T-cell (primary cell): ENCODE measurements at regions of chr11 and their contacts with region 1.

Region 1: DNA sequence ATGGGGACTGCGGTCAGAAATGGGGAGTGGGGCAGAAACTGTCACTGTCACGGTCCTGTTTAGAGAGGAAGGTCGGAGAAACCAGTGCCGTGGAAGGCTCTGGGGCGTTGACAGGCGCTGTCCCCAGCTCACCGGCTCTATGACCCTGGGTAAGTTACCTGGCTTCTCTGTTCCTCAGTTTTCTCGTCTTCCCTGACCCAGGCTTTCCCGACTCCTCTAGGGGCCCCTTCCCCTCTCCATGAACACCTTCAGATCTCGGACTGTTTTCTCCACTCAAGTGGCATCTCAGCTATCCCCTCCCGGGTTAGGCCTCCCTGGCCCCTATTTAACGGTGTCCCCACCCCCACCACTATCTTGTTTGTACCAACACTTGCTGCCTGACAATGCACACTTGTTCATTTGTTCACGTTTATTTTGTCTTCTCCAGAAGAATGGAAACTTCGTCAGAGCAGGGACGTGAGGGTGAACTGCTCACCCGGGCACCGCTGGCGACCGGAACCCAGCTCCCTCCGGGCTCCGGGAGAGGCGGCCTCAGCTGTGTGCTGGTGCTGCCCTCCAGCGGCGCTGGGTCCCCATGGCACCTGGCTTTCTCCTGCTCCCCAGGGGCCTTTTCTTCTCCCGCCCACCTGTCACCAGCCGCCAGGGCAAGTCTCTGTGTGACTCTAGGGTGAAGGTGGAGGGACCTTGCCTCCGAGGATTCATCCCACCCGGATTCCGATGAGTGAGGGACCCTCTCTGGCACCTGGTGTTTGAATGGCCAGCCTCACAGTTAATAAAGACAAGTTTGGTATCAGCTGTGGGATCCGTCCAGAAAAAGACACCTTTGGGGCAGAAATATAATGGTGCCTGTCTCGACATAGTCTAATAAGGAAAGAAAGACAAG is 33.1 kb upstream of the SLC35C1 start:
- DNase-seq: peak; percentile 41 to 86 (median 69)
- ATAC-seq: peak; percentile 87 to 89 (median 87)
- H3K4me3 ChIP-seq: peak overlapping the region; percentile 52 to 94
- H3K4me3 Mint-ChIP-seq: peak overlapping the region; percentile 88 to 96 (median 92)
- H3K27ac ChIP-seq: peak overlapping the region; percentile 48
- H3K27ac Mint-ChIP-seq: peak overlapping the region; percentile 72 to 85
- H3K4me1 ChIP-seq: peaks cover 6 to 19% of the 10 kb centered on the region in 2 experiments
- H3K4me1 Mint-ChIP-seq: peaks cover 15 to 27% (median 22%) of the 10 kb centered on the region in 3 donors
- H3K27me3 ChIP-seq: no peaks in the 10 kb centered on the region
- H3K27me3 Mint-ChIP-seq: no peaks in the 10 kb centered on the region

Region 2: DNA sequence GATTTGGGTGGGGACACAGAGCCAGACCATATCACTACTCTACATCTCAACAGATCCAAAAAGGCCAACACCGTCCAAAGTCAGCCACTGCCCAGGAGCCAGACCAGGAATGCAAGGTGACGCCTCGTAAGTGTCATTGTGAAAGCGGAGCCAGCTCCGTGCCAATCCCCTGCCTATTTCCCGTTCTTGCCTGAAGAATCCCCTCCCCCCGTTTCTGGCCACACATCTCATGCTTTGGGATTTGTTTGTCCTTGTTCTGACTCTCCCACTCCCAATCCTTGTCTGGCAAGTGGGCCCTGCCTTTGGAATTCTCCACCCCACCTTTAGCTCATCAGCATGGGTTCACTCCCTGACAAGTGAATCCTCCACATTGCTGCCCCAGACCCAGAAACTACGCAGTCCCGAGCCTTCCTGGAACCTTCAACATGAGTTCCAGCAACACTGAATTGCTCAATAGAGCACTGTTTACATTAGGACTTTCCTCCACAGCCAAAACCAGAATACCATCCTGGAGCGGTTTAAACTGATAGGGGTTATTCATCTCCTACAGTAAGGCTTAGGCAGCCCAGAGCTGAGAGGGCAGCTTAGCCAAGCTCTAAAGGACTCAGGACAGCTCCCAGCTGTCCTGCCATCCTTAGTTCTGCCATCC is 27.1 kb after region 1 on chr11:
- CTCF ChIA-PET with region 1: interaction called, 3 to 10 read pairs
- POLR2A ChIA-PET with region 1: no interaction called
- DNase-seq: no peak
- ATAC-seq: no peak
- H3K4me3 ChIP-seq: no peak overlapping the region
- H3K4me3 Mint-ChIP-seq: no peak overlapping the region
- H3K27ac ChIP-seq: no peak overlapping the region
- H3K27ac Mint-ChIP-seq: no peak overlapping the region
- H3K4me1 ChIP-seq: peaks cover 0 to 4% of the 10 kb centered on the region in 2 experiments
- H3K4me1 Mint-ChIP-seq: peaks cover 0 to 4% (median 0%) of the 10 kb centered on the region in 3 donors
- H3K27me3 ChIP-seq: no peaks in the 10 kb centered on the region
- H3K27me3 Mint-ChIP-seq: no peaks in the 10 kb centered on the region

Region 3: GRCh38 chr11:46006418-46007070 is 234.7 kb after region 1 on chr11:
- CTCF ChIA-PET with region 1: interaction called in 1 of 2 experiments, 14 read pairs
- POLR2A ChIA-PET with region 1: no interaction called
- DNase-seq: peak in 12 of 35 experiments; percentile 1 to 76 (median 6)
- ATAC-seq: peak; percentile 50 to 86 (median 79)
- H3K4me3 ChIP-seq: no peak overlapping the region
- H3K4me3 Mint-ChIP-seq: no peak overlapping the region
- H3K27ac ChIP-seq: no peak overlapping the region
- H3K27ac Mint-ChIP-seq: no peak overlapping the region
- H3K4me1 ChIP-seq: no peaks in the 10 kb centered on the region
- H3K4me1 Mint-ChIP-seq: peaks cover 2 to 10% (median 8%) of the 10 kb centered on the region in 3 donors
- H3K27me3 ChIP-seq: no peaks in the 10 kb centered on the region
- H3K27me3 Mint-ChIP-seq: no peaks in the 10 kb centered on the region